Ascending aorta (tissue), 2 donors: ENCODE measurements at regions of chr7 and their contacts with region 1.

Region 1: GRCh38 chr7:87152107-87152844 is at the start of gene DMTF1:
- DNase-seq: peak; percentile 79 to 97
- H3K4me3 ChIP-seq: peak within 1 kb of the TSS; percentile 81 to 88
- H3K27ac ChIP-seq: peak within 1 kb of the TSS; percentile 96 to 99
- H3K4me1 ChIP-seq: peaks cover 3 to 21% of the 10 kb centered on the region in 2 donors
- H3K27me3 ChIP-seq: no peaks in the 10 kb centered on the region
- CTCF ChIP-seq: no peak
- total RNA-seq, gene DMTF1: 23.1 TPM

Region 2: GRCh38 chr7:87059525-87060287 is 92.6 kb before region 1 on chr7 and contains the start of gene ELAPOR2:
- intact Hi-C with region 1: loop called (anchors 1 kb)
- DNase-seq: peak; percentile 33 to 87
- H3K4me3 ChIP-seq: peak within 1 kb of the TSS; percentile 72 to 98
- H3K27ac ChIP-seq: peak within 1 kb of the TSS in 1 of 2 donors; percentile 45
- H3K4me1 ChIP-seq: peaks cover 0 to 9% of the 10 kb centered on the region in 2 donors
- H3K27me3 ChIP-seq: no peaks in the 10 kb centered on the region
- CTCF ChIP-seq: peak; percentile 44 to 58 (median 53)
- total RNA-seq, gene ELAPOR2: 1.1 TPM

Region 3: DNA sequence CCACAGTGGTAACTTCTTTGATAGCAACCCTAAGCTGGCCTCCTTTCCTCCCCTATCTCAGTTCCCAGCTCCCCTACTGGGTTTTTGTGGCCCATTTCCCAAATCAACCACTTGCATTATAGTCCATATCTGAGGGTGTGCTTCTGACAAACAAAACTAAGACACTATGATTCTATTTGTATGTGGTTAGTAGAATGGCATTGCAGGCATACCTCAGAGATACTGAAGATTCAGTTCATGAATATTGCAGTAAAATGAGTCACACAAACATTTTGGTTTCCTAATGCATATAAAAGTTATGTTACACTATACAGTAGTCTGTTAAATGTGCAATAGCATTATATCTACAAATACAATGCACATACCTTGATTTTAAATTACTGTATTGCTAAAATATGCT is 82.7 kb after region 1 on chr7:
- intact Hi-C with region 1: loop called (anchors 5 kb)
- DNase-seq: no peak
- H3K4me3 ChIP-seq: no peak overlapping the region
- H3K27ac ChIP-seq: no peak overlapping the region
- H3K4me1 ChIP-seq: peaks cover 3 to 8% of the 10 kb centered on the region in 2 donors
- H3K27me3 ChIP-seq: no peaks in the 10 kb centered on the region
- CTCF ChIP-seq: no peak

Region 4: GRCh38 chr7:87416682-87417587 is 264.7 kb after region 1 on chr7:
- intact Hi-C with region 1: loop called (anchors 5 kb)
- DNase-seq: peak in 1 of 2 donors; percentile 73
- H3K4me3 ChIP-seq: no peak overlapping the region
- H3K27ac ChIP-seq: no peak overlapping the region
- H3K4me1 ChIP-seq: peaks cover 0 to 3% of the 10 kb centered on the region in 2 donors
- H3K27me3 ChIP-seq: no peaks in the 10 kb centered on the region
- CTCF ChIP-seq: peak; percentile 40 to 70 (median 50)

Region 5: DNA sequence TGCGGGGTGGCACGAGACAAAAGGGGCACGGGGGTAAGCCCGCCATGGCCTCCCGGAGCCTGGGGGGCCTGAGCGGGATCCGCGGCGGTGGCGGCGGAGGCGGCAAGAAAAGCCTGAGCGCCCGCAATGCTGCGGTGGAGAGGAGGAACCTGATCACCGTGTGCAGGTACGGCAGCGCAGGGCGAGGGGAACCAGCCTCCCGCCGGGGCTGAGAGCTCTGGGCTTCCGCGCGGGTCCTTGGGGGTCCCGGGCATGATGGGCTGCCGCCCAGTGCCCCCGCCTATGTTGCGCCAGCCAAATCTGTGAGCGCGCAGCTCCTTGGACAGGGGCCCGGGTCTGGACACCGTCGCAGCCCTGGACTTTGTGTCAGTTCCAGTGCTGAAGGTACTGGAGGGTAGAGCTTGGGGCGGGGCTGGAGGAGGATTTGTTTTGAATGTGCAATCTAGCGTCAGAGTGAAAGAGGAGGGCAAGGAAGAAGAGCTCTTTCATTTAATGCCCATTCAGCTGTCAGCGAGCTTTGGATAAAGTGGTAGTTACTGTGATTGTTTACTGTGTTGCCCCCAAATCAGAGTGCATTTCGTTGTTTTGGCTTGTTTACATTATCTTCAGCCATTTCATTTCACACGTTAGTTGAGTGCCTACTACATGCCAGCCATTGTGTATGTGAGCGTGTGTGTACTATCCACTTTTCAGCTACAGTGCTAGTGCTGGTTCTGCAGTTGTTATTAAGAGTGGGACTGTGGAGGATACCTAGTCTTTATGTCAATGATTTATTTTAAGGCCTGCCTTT is 476.7 kb after region 1 on chr7:
- intact Hi-C with region 1: loop called (anchors 5 kb)
- DNase-seq: no peak
- H3K4me3 ChIP-seq: peak overlapping the region; percentile 66 to 71
- H3K27ac ChIP-seq: no peak overlapping the region
- H3K4me1 ChIP-seq: peaks cover 2 to 5% of the 10 kb centered on the region in 2 donors
- H3K27me3 ChIP-seq: no peaks in the 10 kb centered on the region
- CTCF ChIP-seq: no peak

Region 6: GRCh38 chr7:88219781-88220747 is 1067.8 kb after region 1 on chr7 and contains the start of gene SRI:
- intact Hi-C with region 1: loop called (anchors 10 kb)
- DNase-seq: peak; percentile 40 to 93
- H3K4me3 ChIP-seq: peak within 1 kb of the TSS; percentile 82 to 88
- H3K27ac ChIP-seq: peak within 1 kb of the TSS; percentile 86 to 89
- H3K4me1 ChIP-seq: peaks cover 6 to 7% of the 10 kb centered on the region in 2 donors
- H3K27me3 ChIP-seq: no peaks in the 10 kb centered on the region
- CTCF ChIP-seq: peak; percentile 58 to 88 (median 80)
- total RNA-seq, gene SRI: 16.7 TPM